Naive thymus-derived CD4-positive, alpha-beta T cell (primary cell): ENCODE measurements at regions of chr9 and their contacts with region 1.

Region 1: GRCh38 chr9:5375091-5375490 is 35.4 kb upstream of the RLN1 start:
- DNase-seq: peak in 1 of 9 donors; percentile 31
- ATAC-seq: no peak
- H3K4me3 ChIP-seq: no peak overlapping the region
- H3K4me3 Mint-ChIP-seq: peak overlapping the region in 4 of 10 donors; percentile 3 to 48 (median 8)
- H3K27ac ChIP-seq: no peak overlapping the region
- H3K27ac Mint-ChIP-seq: peak overlapping the region in 5 of 9 donors; percentile 2 to 56 (median 3)
- H3K4me1 ChIP-seq: peaks cover 0 to 3% of the 10 kb centered on the region in 2 donors
- H3K4me1 Mint-ChIP-seq: peaks cover 23 to 39% (median 33%) of the 10 kb centered on the region in 7 donors
- H3K27me3 ChIP-seq: no peaks in the 10 kb centered on the region
- H3K27me3 Mint-ChIP-seq: no peaks in the 10 kb centered on the region

Region 2: DNA sequence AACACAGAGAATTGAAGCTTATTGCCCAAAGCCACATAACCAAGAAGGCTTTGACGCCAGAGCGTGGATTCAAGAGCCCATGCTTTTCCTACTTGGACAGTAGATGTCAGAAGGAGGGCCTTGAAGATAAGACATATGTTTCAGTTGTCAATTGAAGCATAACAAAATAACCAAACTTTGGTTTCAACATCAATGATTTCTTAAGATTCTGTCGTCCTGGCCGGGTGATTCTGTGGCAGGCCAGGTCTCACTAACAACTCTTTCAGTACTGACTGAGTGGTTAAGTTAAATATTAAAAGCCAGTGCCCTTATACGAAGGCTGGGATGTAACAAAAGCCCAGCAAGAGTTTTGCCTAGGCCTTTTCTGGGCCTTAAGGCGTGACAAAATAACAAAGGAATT is 488.4 kb before region 1 on chr9:
- CTCF ChIA-PET with region 1: no interaction called
- POLR2A ChIA-PET with region 1: no interaction called
- intact Hi-C with region 1: no loop called
- DNase-seq: no peak
- ATAC-seq: no peak
- H3K4me3 ChIP-seq: no peak overlapping the region
- H3K4me3 Mint-ChIP-seq: no peak overlapping the region
- H3K27ac ChIP-seq: no peak overlapping the region
- H3K27ac Mint-ChIP-seq: no peak overlapping the region
- H3K4me1 ChIP-seq: no peaks in the 10 kb centered on the region
- H3K4me1 Mint-ChIP-seq: peaks cover 0 to 6% (median 0%) of the 10 kb centered on the region in 7 donors
- H3K27me3 ChIP-seq: no peaks in the 10 kb centered on the region
- H3K27me3 Mint-ChIP-seq: no peaks in the 10 kb centered on the region

Region 3: GRCh38 chr9:5326893-5327548 is 48.1 kb before region 1 on chr9:
- CTCF ChIA-PET with region 1: no interaction called
- POLR2A ChIA-PET with region 1: no interaction called
- intact Hi-C with region 1: loop called in 1 of 2 experiments (anchors 10 kb)
- DNase-seq: peak in 7 of 9 donors; percentile 12 to 49 (median 36)
- ATAC-seq: peak; percentile 50
- H3K4me3 ChIP-seq: no peak overlapping the region
- H3K4me3 Mint-ChIP-seq: peak overlapping the region in 4 of 10 donors; percentile 8 to 61 (median 22)
- H3K27ac ChIP-seq: no peak overlapping the region
- H3K27ac Mint-ChIP-seq: peak overlapping the region in 5 of 9 donors; percentile 26 to 69 (median 59)
- H3K4me1 ChIP-seq: peaks cover 3 to 9% of the 10 kb centered on the region in 2 donors
- H3K4me1 Mint-ChIP-seq: peaks cover 7 to 67% (median 44%) of the 10 kb centered on the region in 7 donors
- H3K27me3 ChIP-seq: no peaks in the 10 kb centered on the region
- H3K27me3 Mint-ChIP-seq: no peaks in the 10 kb centered on the region

Region 4: DNA sequence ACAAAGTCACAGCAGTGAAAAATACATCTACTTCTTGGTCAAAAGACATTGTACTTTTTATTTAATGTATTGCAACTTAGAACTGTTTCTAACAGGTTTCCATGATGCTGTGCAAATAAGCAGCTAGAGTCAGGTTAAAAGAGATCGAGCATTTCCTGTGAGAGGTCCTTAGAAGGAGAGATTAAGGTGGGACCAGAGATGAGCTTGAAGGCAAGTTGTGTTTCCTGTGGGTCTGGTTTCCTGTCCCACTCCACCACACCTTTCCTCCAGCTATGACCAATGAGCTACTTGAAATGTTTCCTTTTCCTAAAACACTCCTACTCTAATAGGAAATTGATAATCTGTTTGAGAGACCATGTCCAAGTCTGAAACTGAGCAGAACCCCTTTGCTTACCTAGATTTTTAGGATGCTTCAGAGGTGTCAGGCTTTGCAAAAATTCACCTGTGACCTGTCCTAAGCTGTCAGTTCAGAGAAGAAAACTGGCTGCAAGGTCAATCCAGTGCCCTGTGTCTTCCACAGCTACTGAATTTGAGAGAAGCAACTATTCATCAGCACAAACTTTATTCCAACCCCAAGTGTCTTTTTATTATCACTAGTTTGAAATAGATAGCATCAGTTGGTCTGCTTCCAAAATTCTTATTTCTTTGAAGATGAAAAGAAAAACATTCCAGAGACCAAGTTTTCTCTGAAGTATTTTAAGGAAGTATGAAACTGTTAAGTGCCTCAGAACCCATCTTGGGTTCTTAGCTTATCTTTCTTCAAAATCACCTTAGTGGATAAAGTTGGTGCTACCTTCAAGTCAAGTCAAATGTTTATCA is 22.2 kb before region 1 on chr9:
- CTCF ChIA-PET with region 1: no interaction called
- POLR2A ChIA-PET with region 1: interaction called, 3 read pairs
- intact Hi-C with region 1: loop called in 1 of 2 experiments (anchors 2 kb)
- DNase-seq: peak in 6 of 9 donors; percentile 17 to 40 (median 36)
- ATAC-seq: peak; percentile 70
- H3K4me3 ChIP-seq: no peak overlapping the region
- H3K4me3 Mint-ChIP-seq: peak overlapping the region; percentile 21 to 75 (median 64)
- H3K27ac ChIP-seq: no peak overlapping the region
- H3K27ac Mint-ChIP-seq: peak overlapping the region; percentile 62 to 87 (median 76)
- H3K4me1 ChIP-seq: peaks cover 35 to 38% of the 10 kb centered on the region in 2 donors
- H3K4me1 Mint-ChIP-seq: peaks cover 21 to 61% (median 39%) of the 10 kb centered on the region in 7 donors
- H3K27me3 ChIP-seq: no peaks in the 10 kb centered on the region
- H3K27me3 Mint-ChIP-seq: no peaks in the 10 kb centered on the region